ENCODE measurements at regions of chr1 and their contacts with region 1.

Region 1: GRCh38 chr1:55284852-55285251 is 69.7 kb upstream of the USP24 start:
- DNase-seq: peak in 3 of 5 donors; percentile 8 to 23 (median 14)
- H3K4me3 ChIP-seq: no peak overlapping the region
- H3K4me3 Mint-ChIP-seq: no peak overlapping the region
- H3K27ac ChIP-seq: no peak overlapping the region
- H3K27ac Mint-ChIP-seq: no peak overlapping the region
- H3K4me1 ChIP-seq: no peaks in the 10 kb centered on the region
- H3K4me1 Mint-ChIP-seq: no peaks in the 10 kb centered on the region
- H3K27me3 ChIP-seq: no peaks in the 10 kb centered on the region
- H3K27me3 Mint-ChIP-seq: peaks cover 2 to 11% of the 10 kb centered on the region in 2 donors

Region 2: GRCh38 chr1:55512466-55512865 is 227.6 kb after region 1 on chr1:
- CTCF ChIA-PET with region 1: no interaction called
- POLR2A ChIA-PET with region 1: no interaction called
- intact Hi-C with region 1: no loop called
- DNase-seq: no peak
- H3K4me3 ChIP-seq: no peak overlapping the region
- H3K4me3 Mint-ChIP-seq: no peak overlapping the region
- H3K27ac ChIP-seq: no peak overlapping the region
- H3K27ac Mint-ChIP-seq: no peak overlapping the region
- H3K4me1 ChIP-seq: no peaks in the 10 kb centered on the region
- H3K4me1 Mint-ChIP-seq: no peaks in the 10 kb centered on the region
- H3K27me3 ChIP-seq: no peaks in the 10 kb centered on the region
- H3K27me3 Mint-ChIP-seq: peaks cover 10 to 15% of the 10 kb centered on the region in 2 donors

Region 3: DNA sequence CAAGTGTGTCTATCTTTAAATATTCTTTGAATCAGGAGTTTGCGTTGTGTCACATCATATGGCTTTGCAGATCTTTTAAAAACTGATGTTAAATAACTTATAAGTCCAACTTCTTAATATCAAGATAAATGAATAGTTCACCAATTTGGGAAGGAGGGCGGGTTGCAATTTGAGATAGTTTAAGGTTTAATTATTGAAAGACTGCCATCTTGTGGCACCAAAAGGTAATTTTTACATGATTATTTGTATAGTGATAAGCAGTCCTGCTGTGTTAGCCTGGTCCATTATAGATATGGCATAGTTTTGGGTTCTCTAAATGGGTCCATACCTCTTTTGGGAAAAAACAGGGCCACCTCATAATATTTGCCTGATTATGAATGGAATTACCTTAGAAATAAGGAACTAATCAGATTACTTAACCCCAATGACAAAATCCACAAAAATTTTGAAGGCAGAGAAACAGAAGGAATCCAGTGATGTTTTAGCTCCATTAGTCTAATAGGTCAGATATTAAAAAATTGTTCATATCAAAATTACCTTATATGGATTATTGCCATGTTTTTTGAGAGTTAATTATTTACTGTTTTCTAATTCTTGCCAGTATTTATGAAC is 1424.5 kb after region 1 on chr1:
- CTCF ChIA-PET with region 1: interaction called, 13 read pairs
- POLR2A ChIA-PET with region 1: no interaction called
- intact Hi-C with region 1: no loop called
- DNase-seq: peak in 4 of 5 donors; percentile 2 to 13 (median 6)
- H3K4me3 ChIP-seq: no peak overlapping the region
- H3K4me3 Mint-ChIP-seq: no peak overlapping the region
- H3K27ac ChIP-seq: no peak overlapping the region
- H3K27ac Mint-ChIP-seq: no peak overlapping the region
- H3K4me1 ChIP-seq: no peaks in the 10 kb centered on the region
- H3K4me1 Mint-ChIP-seq: no peaks in the 10 kb centered on the region
- H3K27me3 ChIP-seq: peaks cover 4% of the 10 kb centered on the region
- H3K27me3 Mint-ChIP-seq: peaks cover 2 to 9% of the 10 kb centered on the region in 2 donors

Measured in CD4-positive, alpha-beta memory T cell (primary cell).